ENCODE measurements at regions of chr17 and their contacts with region 1.

Region 1: GRCh38 chr17:29180034-29180787 is at the start of gene MYO18A:
- DNase-seq: peak; percentile 71
- ATAC-seq: peak; percentile 94
- H3K4me3 ChIP-seq: peak within 1 kb of the TSS; percentile 79
- H3K27ac ChIP-seq: peak within 1 kb of the TSS; percentile 84
- H3K4me1 ChIP-seq: peaks cover 29% of the 10 kb centered on the region
- H3K27me3 ChIP-seq: no peaks in the 10 kb centered on the region
- CTCF ChIP-seq: peak; percentile 98
- POLR2A ChIP-seq: no peak
- RAD21 ChIP-seq: peak; percentile 71
- total RNA-seq, gene MYO18A: 39.1 and 40.0 TPM in 2 replicates

Region 2: GRCh38 chr17:29111816-29112499 is 68.3 kb before region 1 on chr17:
- CTCF ChIA-PET with region 1: no interaction called
- POLR2A ChIA-PET with region 1: no interaction called
- dilution Hi-C with region 1: no loop called
- in situ Hi-C with region 1: no loop called
- intact Hi-C with region 1: no loop called
- DNase-seq: peak; percentile 55
- ATAC-seq: peak; percentile 88
- H3K4me3 ChIP-seq: no peak overlapping the region
- H3K27ac ChIP-seq: no peak overlapping the region
- H3K4me1 ChIP-seq: peaks cover 5% of the 10 kb centered on the region
- H3K27me3 ChIP-seq: no peaks in the 10 kb centered on the region
- CTCF ChIP-seq: peak; percentile 85
- POLR2A ChIP-seq: no peak
- RAD21 ChIP-seq: peak; percentile 77

Region 3: DNA sequence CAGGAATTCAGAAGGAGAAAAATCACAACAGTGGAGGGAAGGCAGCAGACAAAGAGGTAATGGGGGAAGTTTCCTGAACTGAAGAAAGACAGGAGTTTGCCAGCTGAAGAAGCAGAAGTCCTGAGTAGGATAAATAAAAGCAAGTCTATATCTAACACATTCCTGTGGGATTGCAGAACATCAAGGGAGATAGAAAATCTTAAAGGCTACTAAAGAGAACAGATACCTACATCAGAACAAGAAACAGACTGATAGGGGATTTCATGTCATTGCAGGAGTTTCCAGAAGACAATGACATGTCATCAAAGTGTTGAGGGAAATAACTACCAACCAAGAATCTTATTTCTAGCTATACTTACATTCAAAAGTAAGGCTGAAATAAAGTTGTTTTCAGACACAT is 45.2 kb after region 1 on chr17:
- CTCF ChIA-PET with region 1: no interaction called
- POLR2A ChIA-PET with region 1: no interaction called
- dilution Hi-C with region 1: no loop called
- in situ Hi-C with region 1: no loop called
- intact Hi-C with region 1: no loop called
- DNase-seq: peak; percentile 31
- ATAC-seq: peak; percentile 77
- H3K4me3 ChIP-seq: no peak overlapping the region
- H3K27ac ChIP-seq: no peak overlapping the region
- H3K4me1 ChIP-seq: 0 out of 2 replicates have a peak, but pooled peaks cover 1% of the 10 kb centered on the region
- H3K27me3 ChIP-seq: no peaks in the 10 kb centered on the region
- CTCF ChIP-seq: no peak
- POLR2A ChIP-seq: no peak
- RAD21 ChIP-seq: no peak

Region 4: DNA sequence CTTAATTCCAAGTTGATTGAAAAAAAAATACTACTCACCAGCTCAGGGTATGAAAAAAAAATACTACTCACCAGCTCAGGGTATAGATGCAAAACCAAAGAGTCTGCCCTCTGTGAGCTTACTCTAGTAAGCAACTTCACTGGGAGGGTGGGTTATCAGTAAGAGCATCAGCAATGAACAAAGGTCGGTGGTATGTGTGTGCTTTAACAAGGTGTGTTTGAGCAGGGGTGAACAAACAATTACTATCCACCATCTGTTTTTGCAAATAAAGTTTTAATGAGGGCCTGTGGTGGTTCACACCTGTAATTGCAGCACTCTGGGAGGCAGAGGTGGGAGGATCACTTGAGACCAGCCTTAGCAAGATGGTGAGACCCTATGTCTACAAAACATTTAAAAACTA is 93.7 kb after region 1 on chr17:
- CTCF ChIA-PET with region 1: no interaction called
- POLR2A ChIA-PET with region 1: no interaction called
- dilution Hi-C with region 1: no loop called
- in situ Hi-C with region 1: no loop called
- intact Hi-C with region 1: no loop called
- DNase-seq: no peak
- ATAC-seq: no peak
- H3K4me3 ChIP-seq: no peak overlapping the region
- H3K27ac ChIP-seq: no peak overlapping the region
- H3K4me1 ChIP-seq: peaks cover 5% of the 10 kb centered on the region
- H3K27me3 ChIP-seq: no peaks in the 10 kb centered on the region
- CTCF ChIP-seq: no peak
- POLR2A ChIP-seq: no peak
- RAD21 ChIP-seq: no peak

Region 5: DNA sequence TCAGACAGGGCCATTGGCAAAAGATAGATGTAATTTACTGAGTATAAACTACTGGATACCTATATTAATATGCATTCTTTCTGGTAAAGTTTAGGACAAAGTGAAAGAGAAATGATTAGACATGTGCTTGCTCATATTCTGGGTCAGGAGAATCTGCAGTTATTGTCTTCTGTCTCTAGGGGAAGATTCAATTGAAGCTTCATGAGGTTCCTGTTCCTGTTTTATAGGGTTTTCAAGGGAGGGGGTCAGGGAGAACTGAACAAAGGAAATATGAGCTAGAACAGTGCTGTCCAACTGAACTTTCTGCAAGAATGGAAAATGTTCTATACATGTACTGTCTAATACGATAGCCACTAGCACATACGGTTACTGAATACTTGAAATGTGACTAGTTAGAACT is 501.8 kb after region 1 on chr17:
- CTCF ChIA-PET with region 1: no interaction called
- POLR2A ChIA-PET with region 1: interaction called, 12 read pairs
- dilution Hi-C with region 1: no loop called
- in situ Hi-C with region 1: no loop called
- intact Hi-C with region 1: no loop called
- DNase-seq: no peak
- ATAC-seq: no peak
- H3K4me3 ChIP-seq: no peak overlapping the region
- H3K27ac ChIP-seq: no peak overlapping the region
- H3K4me1 ChIP-seq: peaks cover 4% of the 10 kb centered on the region
- H3K27me3 ChIP-seq: no peaks in the 10 kb centered on the region
- CTCF ChIP-seq: no peak
- POLR2A ChIP-seq: no peak
- RAD21 ChIP-seq: no peak